GM10248 (cell line): ENCODE measurements at regions of chr2 and their contacts with region 1.

Region 1: DNA sequence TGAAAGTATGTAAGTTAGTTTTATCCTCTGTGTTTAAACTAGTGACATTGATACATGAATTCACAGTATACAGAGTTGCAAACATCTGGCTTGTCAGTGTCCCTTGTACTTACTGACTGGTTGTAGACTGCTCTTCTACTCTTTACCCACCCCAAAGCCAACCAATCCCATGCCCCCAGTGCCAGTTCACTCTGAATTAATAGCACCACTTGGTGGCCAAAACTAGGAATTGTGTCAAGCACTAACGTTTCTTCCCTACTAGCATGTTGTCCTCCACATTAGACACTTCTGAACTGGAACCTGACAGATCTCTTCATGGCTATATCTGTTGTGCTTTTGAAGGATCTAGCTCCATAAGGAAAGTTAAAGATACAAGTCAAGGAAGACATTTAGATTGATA is 27.2 kb upstream of the OTX1 start:
- DNase-seq: peak; percentile 18
- CTCF ChIP-seq: no peak

Region 2: DNA sequence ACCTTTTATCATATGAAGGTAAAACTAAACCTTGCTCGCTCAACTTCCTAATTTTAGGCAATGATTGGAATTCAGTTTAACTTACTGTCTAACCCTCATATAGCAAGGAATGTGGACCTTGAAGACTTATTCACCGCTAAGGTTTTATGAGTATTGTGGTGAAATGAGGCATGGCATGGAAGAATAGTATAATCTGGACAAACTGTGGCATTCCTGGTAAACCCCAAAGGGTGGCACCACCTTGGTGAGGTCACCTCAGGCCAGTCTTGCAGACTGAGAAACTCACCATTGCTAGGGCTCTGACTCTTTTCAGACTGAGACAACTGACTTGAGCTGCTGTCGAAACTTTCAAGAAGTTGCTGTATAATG is 369.0 kb before region 1 on chr2:
- CTCF ChIA-PET with region 1: no interaction called
- POLR2A ChIA-PET with region 1: no interaction called
- DNase-seq: no peak
- CTCF ChIP-seq: no peak

Region 3: GRCh38 chr2:63012541-63012940 is 10.9 kb before region 1 on chr2:
- CTCF ChIA-PET with region 1: interaction called, 14 read pairs
- POLR2A ChIA-PET with region 1: interaction called, 3 read pairs
- DNase-seq: no peak
- CTCF ChIP-seq: no peak

Region 4: DNA sequence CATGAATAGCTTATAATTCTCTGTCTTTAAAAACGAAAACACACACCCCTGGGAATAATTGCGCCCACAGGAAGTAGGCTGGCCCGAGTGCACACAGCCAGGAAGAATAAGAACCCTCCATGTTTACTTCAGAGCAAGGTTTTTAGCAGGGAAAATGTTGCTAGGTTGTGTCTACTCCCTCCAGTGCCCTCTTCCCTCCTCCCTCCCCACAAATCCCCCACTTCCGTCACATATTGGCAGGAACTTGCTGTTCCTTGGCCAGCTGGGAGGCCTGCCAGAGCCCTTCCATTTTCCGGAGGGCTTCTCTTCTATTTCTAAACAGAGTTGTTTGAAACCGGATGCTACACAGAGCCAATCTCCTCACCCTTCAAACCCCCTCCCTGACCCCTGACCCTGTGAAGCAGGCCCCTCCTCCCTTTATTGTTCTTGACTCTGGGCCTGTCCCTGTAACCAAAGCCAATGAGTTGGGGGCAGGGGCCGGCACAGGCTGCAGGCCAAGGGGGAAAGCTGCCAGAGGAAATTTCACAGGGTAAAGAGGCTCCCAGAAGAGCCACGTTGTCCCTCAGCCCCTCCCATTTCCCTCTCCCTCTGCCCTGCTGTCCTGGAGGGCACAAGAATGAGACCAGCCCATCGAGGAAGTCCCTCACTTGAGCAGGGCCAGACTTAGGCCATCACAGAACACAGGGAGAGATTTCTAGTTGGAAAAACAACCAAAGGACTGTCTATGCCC is 1380.7 kb after region 1 on chr2:
- CTCF ChIA-PET with region 1: no interaction called
- POLR2A ChIA-PET with region 1: no interaction called
- DNase-seq: no peak
- CTCF ChIP-seq: no peak